Naive thymus-derived CD4-positive, alpha-beta T cell (primary cell): ENCODE measurements at regions of chr11 and their contacts with region 1.

Region 1: DNA sequence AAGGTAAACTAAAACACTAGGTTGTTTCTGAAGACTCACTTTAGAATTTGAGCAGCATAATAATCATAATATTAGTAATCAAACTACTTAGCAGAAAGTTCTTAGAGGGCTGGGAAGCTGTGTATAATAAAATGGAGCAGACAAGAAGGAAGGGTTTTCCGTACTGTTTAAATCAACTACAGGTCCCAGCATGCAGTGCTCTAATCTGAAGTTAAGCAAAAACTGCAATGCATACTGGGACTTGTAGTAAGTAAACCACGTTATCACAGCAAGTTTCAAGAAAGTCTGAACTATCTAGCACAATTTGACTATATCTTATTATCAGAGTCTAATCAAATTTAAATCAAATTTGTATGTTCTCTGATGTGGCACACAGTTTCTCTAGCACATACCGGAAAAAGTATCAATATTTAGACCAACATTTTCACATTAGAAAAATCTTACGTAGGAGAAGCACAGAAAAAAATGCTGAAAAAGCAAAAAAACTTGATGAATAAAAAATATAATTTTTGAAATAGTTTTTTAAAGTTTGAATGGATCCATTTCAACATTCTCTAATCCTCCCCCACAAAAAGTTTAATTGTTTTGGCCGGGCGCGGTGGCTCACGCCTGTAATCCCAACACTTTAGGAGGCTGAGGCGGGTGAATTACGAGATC is 8.2 kb downstream of the PHF21A start:
- DNase-seq: peak in 7 of 9 donors; percentile 36 to 76 (median 55)
- ATAC-seq: peak; percentile 99
- H3K4me3 ChIP-seq: no peak overlapping the region
- H3K4me3 Mint-ChIP-seq: peak overlapping the region in 6 of 10 donors; percentile 27 to 57 (median 31)
- H3K27ac ChIP-seq: no peak overlapping the region
- H3K27ac Mint-ChIP-seq: peak overlapping the region in 4 of 9 donors; percentile 51 to 63 (median 56)
- H3K4me1 ChIP-seq: peaks cover 13 to 23% of the 10 kb centered on the region in 2 donors
- H3K4me1 Mint-ChIP-seq: peaks cover 24 to 57% (median 45%) of the 10 kb centered on the region in 7 donors
- H3K27me3 ChIP-seq: no peaks in the 10 kb centered on the region
- H3K27me3 Mint-ChIP-seq: no peaks in the 10 kb centered on the region

Region 2: GRCh38 chr11:46050003-46050461 is 63.1 kb before region 1 on chr11:
- CTCF ChIA-PET with region 1: no interaction called
- POLR2A ChIA-PET with region 1: no interaction called
- intact Hi-C with region 1: no loop called
- DNase-seq: no peak
- ATAC-seq: no peak
- H3K4me3 ChIP-seq: no peak overlapping the region
- H3K4me3 Mint-ChIP-seq: no peak overlapping the region
- H3K27ac ChIP-seq: no peak overlapping the region
- H3K27ac Mint-ChIP-seq: no peak overlapping the region
- H3K4me1 ChIP-seq: no peaks in the 10 kb centered on the region
- H3K4me1 Mint-ChIP-seq: peaks cover 2 to 21% (median 9%) of the 10 kb centered on the region in 7 donors
- H3K27me3 ChIP-seq: no peaks in the 10 kb centered on the region
- H3K27me3 Mint-ChIP-seq: no peaks in the 10 kb centered on the region

Region 3: GRCh38 chr11:46100670-46101069 is 12.4 kb before region 1 on chr11:
- CTCF ChIA-PET with region 1: no interaction called
- POLR2A ChIA-PET with region 1: interaction called, 8 read pairs
- intact Hi-C with region 1: loop called (anchors 1 to 2 kb)
- DNase-seq: no peak
- ATAC-seq: peak; percentile 59
- H3K4me3 ChIP-seq: peak overlapping the region; percentile 19
- H3K4me3 Mint-ChIP-seq: peak overlapping the region in 9 of 10 donors; percentile 64 to 81 (median 78)
- H3K27ac ChIP-seq: peak overlapping the region; percentile 61
- H3K27ac Mint-ChIP-seq: peak overlapping the region; percentile 28 to 86 (median 66)
- H3K4me1 ChIP-seq: peaks cover 4 to 12% of the 10 kb centered on the region in 2 donors
- H3K4me1 Mint-ChIP-seq: peaks cover 45 to 85% (median 70%) of the 10 kb centered on the region in 7 donors
- H3K27me3 ChIP-seq: no peaks in the 10 kb centered on the region
- H3K27me3 Mint-ChIP-seq: no peaks in the 10 kb centered on the region